Activated CD8-positive, alpha-beta memory T cell treated with anti-CD3 and anti-CD28 coated beads, Interleukin-2, amount 10 ng/mL, durations not matched to agents 7 days and 5 days (primary cell): ENCODE measurements at regions of chr7 and their contacts with region 1.

Region 1: DNA sequence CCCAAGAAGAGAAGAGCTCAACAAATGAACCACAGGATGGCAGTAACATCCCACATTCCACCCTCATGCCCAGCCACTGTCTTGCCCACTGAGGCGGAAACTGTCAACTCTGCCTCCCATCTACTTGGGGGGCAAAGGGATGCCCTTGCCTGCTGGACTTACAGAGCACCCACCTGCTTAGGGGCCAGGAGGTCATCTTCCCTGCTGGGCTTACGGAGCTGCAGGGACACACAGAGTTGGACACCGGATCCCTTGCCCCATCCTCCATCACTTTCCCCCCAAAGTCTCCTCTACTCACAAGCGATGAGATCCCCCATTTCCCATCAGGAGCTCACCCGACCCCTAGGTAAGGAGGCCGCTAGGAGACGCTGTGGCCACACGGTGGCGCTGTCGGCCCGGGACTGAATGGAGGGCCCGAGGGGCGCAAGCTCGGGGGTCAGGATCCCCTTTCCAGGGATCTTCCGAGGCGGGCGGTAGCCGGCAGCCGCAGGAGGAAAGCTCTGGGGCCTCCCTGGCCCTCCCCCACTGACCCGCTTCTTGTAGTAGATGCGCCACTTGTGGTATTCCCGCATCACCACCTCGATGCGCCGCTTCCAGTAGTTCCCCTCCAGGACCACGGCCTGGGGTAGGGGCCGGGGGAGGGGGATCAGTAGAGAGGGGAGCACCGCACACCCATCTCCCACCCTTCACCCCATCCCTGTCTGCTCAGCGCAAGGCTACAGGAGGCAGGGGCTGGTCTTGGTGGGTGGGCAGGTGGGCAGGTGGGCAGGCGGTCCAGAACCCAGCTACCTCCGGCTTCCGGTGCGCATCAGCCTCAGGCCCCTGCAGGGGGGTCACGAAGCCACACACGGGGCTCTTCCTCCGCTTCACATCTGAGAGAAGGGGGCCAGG is 17.3 kb downstream of the MLXIPL start:
- DNase-seq: peak; percentile 67
- ATAC-seq: peak; percentile 81
- H3K4me3 Mint-ChIP-seq: no peak overlapping the region
- H3K27ac Mint-ChIP-seq: no peak overlapping the region
- H3K4me1 Mint-ChIP-seq: no peaks in the 10 kb centered on the region
- H3K27me3 Mint-ChIP-seq: peaks cover 21% of the 10 kb centered on the region

Region 2: DNA sequence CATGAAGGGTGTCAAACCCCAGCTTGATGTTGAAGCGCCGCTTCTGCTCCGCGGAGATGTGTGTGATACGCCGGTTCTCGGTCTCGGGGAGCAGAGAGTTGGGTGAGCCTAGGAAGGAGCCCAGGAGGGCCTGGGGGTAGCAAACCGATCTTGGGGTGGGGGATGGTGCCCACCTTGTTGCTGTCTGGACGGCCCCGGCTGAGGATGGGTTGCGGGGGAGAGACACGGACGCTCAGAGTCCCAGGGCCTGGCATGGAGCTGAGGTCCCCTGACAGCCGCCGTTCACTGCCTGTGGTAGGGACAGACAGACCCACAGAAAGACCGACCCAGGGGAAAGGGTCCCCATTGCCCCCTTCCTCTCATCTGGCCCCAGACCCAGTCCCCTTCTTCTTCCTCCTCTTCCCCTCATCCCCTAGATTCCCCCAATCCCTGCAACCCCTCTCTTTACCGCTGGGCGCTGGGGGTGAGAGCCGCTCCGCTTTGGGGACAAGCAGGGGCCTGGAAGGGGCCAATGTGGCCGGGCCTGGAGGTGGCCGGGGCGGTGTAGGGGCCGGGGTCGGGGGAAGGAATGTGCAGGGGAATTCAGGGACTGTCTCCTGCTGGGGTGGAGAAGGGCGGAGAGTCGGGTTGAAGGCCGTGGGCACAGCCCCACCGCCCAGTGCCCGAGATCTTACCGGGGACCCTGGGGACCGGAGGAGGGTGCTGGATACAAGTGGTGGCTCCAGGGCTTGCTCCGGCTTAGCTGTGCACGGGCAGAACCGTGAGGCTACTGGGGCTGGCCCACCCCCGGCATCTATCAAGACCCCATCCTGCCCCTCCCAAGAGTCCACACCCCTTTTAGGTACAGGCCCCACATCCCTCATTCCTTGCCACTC is 10.6 kb before region 1 on chr7:
- CTCF ChIA-PET with region 1: interaction called, 12 read pairs
- DNase-seq: no peak
- ATAC-seq: no peak
- H3K4me3 Mint-ChIP-seq: no peak overlapping the region
- H3K27ac Mint-ChIP-seq: no peak overlapping the region
- H3K4me1 Mint-ChIP-seq: no peaks in the 10 kb centered on the region
- H3K27me3 Mint-ChIP-seq: peaks cover 5% of the 10 kb centered on the region

Region 3: DNA sequence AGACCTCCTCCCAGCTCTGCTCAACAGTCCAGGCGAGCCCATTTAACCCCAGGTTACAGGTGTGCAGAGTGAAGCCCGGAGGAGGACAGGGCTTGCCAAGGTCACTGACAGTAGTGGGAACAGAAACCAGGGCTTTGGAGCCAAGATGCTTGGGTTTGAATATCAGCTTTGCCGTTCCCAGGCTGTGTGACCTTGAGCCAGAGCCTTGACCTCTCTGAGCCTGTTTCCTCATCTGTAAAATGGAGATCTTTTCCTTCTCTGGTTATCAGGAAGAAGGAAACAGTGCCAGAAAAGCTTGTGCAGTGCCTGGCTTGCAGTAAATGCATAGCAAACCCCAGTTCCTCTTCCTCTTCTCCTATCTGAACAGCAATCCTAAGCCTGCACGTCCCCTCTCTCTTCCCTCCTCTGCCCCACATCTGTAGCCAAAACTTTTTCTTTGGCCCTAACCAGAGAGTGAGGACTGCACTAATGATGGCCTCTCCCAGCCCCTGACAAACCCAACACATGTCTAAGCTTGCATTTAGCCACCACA is 38.7 kb after region 1 on chr7:
- CTCF ChIA-PET with region 1: interaction called, 14 read pairs
- DNase-seq: no peak
- ATAC-seq: no peak
- H3K4me3 Mint-ChIP-seq: no peak overlapping the region
- H3K27ac Mint-ChIP-seq: no peak overlapping the region
- H3K4me1 Mint-ChIP-seq: peaks cover 4% of the 10 kb centered on the region
- H3K27me3 Mint-ChIP-seq: peaks cover 57% of the 10 kb centered on the region

Region 4: DNA sequence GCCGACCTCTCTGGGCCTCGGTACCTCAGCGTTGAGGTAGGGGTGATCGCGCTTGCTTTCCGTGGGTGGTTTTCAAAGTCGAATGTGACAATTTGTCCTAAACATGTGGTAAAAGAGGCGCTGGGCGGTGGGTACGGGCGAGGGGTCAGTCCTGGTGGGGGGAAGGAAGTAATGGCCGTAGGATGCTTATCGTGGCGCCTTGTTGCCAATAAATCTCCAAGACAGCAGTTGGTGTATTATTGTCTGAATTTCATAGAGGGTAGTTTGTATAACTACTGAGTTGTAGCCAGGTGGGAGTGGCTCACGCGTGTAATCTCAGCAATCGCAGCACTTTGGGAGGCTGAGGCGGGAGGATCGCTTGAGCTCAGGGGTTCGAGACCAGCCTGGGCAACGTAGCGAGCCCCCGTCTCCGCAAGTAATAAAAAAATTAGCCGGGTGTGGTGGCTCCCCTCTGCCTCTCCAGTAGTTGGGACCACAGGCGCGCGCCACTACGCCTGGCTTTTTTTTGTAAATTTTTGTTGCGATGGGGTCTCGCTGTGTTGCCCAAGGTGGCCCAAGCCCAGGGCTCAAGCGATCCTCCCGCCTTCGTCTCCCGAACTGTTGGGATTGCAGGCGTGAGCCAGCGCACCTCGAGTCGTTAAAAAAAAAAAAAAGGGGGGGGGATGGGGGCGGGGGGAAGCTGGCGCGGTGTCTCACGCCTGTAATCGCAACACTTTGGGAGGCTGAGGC is 77.1 kb after region 1 on chr7:
- CTCF ChIA-PET with region 1: no interaction called
- DNase-seq: no peak
- ATAC-seq: peak; percentile 1
- H3K4me3 Mint-ChIP-seq: peak overlapping the region; percentile 95
- H3K27ac Mint-ChIP-seq: peak overlapping the region; percentile 96
- H3K4me1 Mint-ChIP-seq: peaks cover 46% of the 10 kb centered on the region
- H3K27me3 Mint-ChIP-seq: no peaks in the 10 kb centered on the region

Region 5: DNA sequence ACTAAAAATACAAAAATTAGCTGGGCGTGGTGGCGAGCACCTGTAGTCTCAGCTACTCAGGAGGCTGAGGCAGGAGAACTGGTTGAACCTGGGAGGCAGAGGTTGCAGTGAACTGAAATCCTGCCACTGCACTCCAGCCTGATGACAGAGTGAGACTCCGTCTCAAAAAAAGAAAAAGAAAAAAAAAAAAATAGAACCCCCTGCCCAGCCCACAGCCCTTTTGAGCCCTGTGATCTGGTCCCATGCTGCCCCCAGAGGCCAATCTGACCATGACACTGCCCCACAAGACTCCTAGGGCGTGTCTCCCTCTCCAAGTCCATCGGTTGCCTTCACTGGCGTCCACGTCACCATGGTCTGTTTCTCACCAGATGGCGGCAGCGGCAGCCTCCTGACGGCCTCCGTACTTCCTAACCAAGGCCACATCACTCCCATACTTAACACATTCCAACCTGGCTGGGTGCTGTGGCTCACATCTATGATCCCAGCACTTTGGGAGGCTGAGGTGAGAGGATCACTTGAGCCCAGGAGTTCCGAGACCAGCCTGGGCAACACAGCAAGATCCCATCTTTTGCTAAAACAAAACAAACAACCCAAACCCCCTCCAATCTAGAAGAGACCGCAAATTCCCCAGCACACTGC is 94.4 kb after region 1 on chr7:
- CTCF ChIA-PET with region 1: interaction called, 16 read pairs
- DNase-seq: no peak
- ATAC-seq: no peak
- H3K4me3 Mint-ChIP-seq: no peak overlapping the region
- H3K27ac Mint-ChIP-seq: no peak overlapping the region
- H3K4me1 Mint-ChIP-seq: peaks cover 5% of the 10 kb centered on the region
- H3K27me3 Mint-ChIP-seq: no peaks in the 10 kb centered on the region

Region 6: GRCh38 chr7:73721377-73721817 is 114.4 kb after region 1 on chr7:
- CTCF ChIA-PET with region 1: interaction called, 58 read pairs
- DNase-seq: no peak
- ATAC-seq: no peak
- H3K4me3 Mint-ChIP-seq: no peak overlapping the region
- H3K27ac Mint-ChIP-seq: no peak overlapping the region
- H3K4me1 Mint-ChIP-seq: peaks cover 26% of the 10 kb centered on the region
- H3K27me3 Mint-ChIP-seq: peaks cover 23% of the 10 kb centered on the region

Region 7: GRCh38 chr7:73738612-73739374 is 131.7 kb after region 1 on chr7 and contains the start of gene ABHD11:
- CTCF ChIA-PET with region 1: interaction called, 147 read pairs
- DNase-seq: peak; percentile 98
- ATAC-seq: peak; percentile 83
- H3K4me3 Mint-ChIP-seq: peak within 1 kb of the TSS; percentile 84
- H3K27ac Mint-ChIP-seq: peak within 1 kb of the TSS; percentile 95
- H3K4me1 Mint-ChIP-seq: peaks cover 21% of the 10 kb centered on the region
- H3K27me3 Mint-ChIP-seq: no peaks in the 10 kb centered on the region
- total RNA-seq, gene ABHD11: 15.9 to 19.2 TPM